Right lobe of liver (tissue), 6 donors: ENCODE measurements at regions of chr6 and their contacts with region 1.

Region 1: GRCh38 chr6:166275714-166276166 is 32.5 kb downstream of the PRR18 start:
- DNase-seq: peak; percentile 76 to 81 (median 77)
- ATAC-seq: peak; percentile 95 to 100 (median 100)
- H3K4me3 ChIP-seq: no peak overlapping the region
- H3K27ac ChIP-seq: no peak overlapping the region
- H3K4me1 ChIP-seq: no peaks in the 10 kb centered on the region
- H3K27me3 ChIP-seq: no peaks in the 10 kb centered on the region
- CTCF ChIP-seq: peak in 3 of 4 donors; percentile 98 to 100 (median 99)
- POLR2A ChIP-seq: no peak

Region 2: DNA sequence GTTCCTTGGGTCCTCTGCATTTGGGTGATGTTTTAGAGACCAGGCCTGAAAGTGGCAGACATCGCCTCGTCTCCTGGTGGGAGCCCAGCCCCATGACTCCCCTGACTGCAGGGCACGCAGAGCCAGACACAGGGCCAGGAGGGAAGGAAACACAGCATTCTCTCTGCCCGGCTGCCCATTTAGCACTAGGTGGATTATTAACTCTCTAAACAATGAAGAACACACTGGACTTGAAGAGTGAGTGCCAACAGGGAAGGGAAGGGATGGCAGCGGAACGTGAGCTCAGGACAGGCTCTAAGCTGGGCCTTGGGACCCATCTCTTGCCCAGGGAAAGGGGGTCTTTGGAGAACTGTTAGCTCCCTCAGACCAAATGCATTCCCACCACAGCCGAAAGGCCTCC is 188.5 kb before region 1 on chr6:
- intact Hi-C with region 1: no loop called
- DNase-seq: no peak
- ATAC-seq: peak in 1 of 4 donors; percentile 12
- H3K4me3 ChIP-seq: no peak overlapping the region
- H3K27ac ChIP-seq: no peak overlapping the region
- H3K4me1 ChIP-seq: no peaks in the 10 kb centered on the region
- H3K27me3 ChIP-seq: no peaks in the 10 kb centered on the region
- CTCF ChIP-seq: no peak
- POLR2A ChIP-seq: no peak

Region 3: GRCh38 chr6:166402582-166403277 is 127.0 kb after region 1 on chr6:
- intact Hi-C with region 1: loop called (anchors 5 kb)
- DNase-seq: no peak
- ATAC-seq: no peak
- H3K4me3 ChIP-seq: no peak overlapping the region
- H3K27ac ChIP-seq: no peak overlapping the region
- H3K4me1 ChIP-seq: peaks cover 0 to 6% (median 2%) of the 10 kb centered on the region in 4 donors
- H3K27me3 ChIP-seq: no peaks in the 10 kb centered on the region
- CTCF ChIP-seq: no peak
- POLR2A ChIP-seq: no peak

Region 4: DNA sequence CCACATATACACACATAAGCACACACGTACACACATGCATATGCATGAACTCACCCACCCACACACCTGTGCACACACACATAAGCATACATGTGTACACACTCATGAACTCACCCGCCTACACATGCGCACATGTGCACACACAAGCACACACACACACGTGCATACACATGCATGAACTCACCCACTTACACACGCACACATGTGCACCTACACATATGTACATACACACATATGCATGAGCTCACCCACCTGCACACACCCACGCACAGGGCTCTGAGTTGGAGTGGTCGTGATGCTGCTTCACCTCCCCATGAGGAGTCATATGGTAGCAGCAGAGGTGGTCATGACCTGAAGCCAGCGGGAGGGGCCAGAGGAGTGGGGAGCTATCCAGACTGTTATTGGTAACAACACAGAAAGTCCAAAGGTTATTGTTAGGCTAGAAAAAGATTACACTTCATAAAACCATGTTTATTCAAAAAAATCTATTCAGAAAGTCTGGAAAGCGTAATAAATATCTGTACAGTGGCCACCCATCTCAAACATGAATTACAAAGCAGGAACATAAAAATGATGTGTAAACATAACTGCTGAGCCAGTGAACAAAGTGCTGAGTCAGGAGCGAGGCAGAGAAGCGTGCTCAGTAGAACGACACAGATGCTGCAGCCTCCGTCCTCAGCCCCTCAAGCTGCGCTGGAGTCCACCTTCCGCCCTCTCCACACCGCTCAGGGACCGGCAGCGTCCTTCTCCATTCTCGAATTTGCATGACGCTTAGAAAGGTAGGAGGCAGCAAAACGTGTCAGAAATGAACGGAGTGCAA is 133.4 kb after region 1 on chr6:
- intact Hi-C with region 1: loop called (anchors 5 kb)
- DNase-seq: no peak
- ATAC-seq: peak; percentile 59 to 72 (median 70)
- H3K4me3 ChIP-seq: no peak overlapping the region
- H3K27ac ChIP-seq: no peak overlapping the region
- H3K4me1 ChIP-seq: peaks cover 0 to 9% (median 3%) of the 10 kb centered on the region in 4 donors
- H3K27me3 ChIP-seq: no peaks in the 10 kb centered on the region
- CTCF ChIP-seq: no peak
- POLR2A ChIP-seq: no peak

Region 5: GRCh38 chr6:166456395-166457156 is 180.8 kb after region 1 on chr6:
- intact Hi-C with region 1: no loop called
- DNase-seq: no peak
- ATAC-seq: no peak
- H3K4me3 ChIP-seq: no peak overlapping the region
- H3K27ac ChIP-seq: no peak overlapping the region
- H3K4me1 ChIP-seq: no peaks in the 10 kb centered on the region
- H3K27me3 ChIP-seq: no peaks in the 10 kb centered on the region
- CTCF ChIP-seq: peak in 1 of 4 donors; percentile 10
- POLR2A ChIP-seq: no peak

Region 6: DNA sequence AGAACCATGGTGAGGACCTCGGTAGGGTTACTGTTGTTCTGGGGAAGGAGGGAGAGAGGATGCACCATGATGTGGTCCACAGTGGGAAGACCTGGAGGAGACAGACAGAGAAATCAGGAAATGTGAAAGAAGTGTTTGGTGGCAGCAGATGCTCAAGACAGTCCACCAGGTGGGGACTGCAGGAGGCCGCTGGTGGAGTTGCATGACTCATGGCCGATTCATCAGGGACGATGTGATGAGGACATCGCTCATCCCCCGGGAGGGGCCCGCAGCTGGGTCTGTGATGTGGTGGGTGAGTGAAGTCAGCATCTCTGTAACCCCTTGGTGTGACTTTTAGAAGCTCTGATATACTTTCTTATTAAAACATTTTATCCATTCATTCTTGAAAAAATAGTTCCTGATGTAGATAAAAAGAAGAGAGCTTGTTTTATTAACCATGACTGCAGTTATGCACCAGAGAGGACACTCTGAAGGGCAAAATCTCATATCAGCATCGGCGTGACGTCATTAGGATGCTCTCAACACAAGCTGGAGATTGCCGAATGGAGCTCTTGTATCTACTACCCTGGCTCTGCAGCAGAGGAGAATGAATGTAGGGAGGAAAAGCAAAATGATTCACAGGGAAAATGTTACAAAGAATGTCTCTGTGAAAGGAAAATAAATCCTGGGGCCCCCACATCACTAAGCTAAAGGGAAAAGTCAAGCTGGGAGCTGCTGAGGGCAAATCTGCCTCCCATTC is 239.5 kb after region 1 on chr6:
- intact Hi-C with region 1: no loop called
- DNase-seq: no peak
- ATAC-seq: peak in 1 of 4 donors; percentile 48
- H3K4me3 ChIP-seq: no peak overlapping the region
- H3K27ac ChIP-seq: no peak overlapping the region
- H3K4me1 ChIP-seq: no peaks in the 10 kb centered on the region
- H3K27me3 ChIP-seq: no peaks in the 10 kb centered on the region
- CTCF ChIP-seq: no peak
- POLR2A ChIP-seq: no peak

Region 7: DNA sequence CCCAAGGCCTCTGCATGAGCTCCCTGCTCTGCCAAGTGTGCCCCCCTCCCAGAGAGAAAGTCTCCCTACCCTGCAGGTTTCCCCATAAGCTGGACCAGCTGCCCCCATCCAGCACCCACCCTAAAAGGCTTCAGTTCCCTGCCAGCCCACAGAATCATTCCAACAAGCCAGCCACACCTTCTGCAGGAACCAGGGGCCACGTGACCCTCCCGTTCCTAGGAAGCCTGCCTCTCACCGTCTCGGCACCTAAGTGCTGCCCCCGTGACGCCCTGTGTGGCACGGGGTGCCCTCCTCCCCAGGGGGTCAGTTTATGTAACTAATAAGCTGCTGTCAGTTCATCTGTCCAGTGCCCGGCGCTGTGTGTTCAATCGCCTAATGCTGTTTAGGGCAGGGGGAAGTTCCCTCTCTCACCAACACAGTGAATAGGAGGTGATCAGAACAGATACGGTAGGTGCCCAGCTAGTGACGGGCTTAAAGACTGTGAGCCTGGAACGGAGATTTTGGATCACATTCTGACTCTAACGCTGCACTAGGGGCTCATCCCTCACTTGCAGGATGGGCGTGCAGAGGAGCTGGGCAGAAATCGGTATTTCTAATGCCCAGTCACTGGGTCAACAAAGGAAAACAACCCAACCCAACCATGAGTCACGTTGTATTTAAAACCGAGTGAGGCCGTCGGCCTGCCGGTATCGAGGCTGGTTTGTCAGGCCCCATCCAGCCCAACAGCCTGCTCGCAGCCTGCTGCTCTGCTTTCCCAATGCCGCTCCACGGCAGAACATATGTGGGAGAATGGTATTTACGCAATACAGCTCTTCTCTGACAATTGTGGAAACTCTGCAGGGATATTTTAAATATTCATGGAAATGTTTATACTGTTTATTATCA is 254.7 kb after region 1 on chr6:
- intact Hi-C with region 1: no loop called
- DNase-seq: no peak
- ATAC-seq: no peak
- H3K4me3 ChIP-seq: no peak overlapping the region
- H3K27ac ChIP-seq: no peak overlapping the region
- H3K4me1 ChIP-seq: no peaks in the 10 kb centered on the region
- H3K27me3 ChIP-seq: no peaks in the 10 kb centered on the region
- CTCF ChIP-seq: no peak
- POLR2A ChIP-seq: no peak